CD8-positive, alpha-beta T cell (primary cell): ENCODE measurements at regions of chr6 and their contacts with region 1.

Region 1: GRCh38 chr6:43723737-43724295 is 36.2 kb upstream of the MRPS18A start:
- DNase-seq: peak; percentile 40 to 83 (median 69)
- ATAC-seq: peak; percentile 65
- H3K4me3 ChIP-seq: no peak overlapping the region
- H3K4me3 Mint-ChIP-seq: no peak overlapping the region
- H3K27ac ChIP-seq: no peak overlapping the region
- H3K27ac Mint-ChIP-seq: no peak overlapping the region
- H3K4me1 ChIP-seq: peaks cover 25% of the 10 kb centered on the region
- H3K4me1 Mint-ChIP-seq: peaks cover 35% of the 10 kb centered on the region
- H3K27me3 ChIP-seq: no peaks in the 10 kb centered on the region
- H3K27me3 Mint-ChIP-seq: no peaks in the 10 kb centered on the region
- CTCF ChIP-seq: peak; percentile 70

Region 2: GRCh38 chr6:41735427-41736356 is 1988.1 kb before region 1 on chr6 and contains the start of gene TFEB:
- CTCF ChIA-PET with region 1: no interaction called
- POLR2A ChIA-PET with region 1: no interaction called
- intact Hi-C with region 1: no loop called
- DNase-seq: peak; percentile 87 to 96 (median 94)
- ATAC-seq: peak; percentile 68
- H3K4me3 ChIP-seq: peak within 1 kb of the TSS; percentile 73 to 75
- H3K4me3 Mint-ChIP-seq: peak within 1 kb of the TSS; percentile 88
- H3K27ac ChIP-seq: peak within 1 kb of the TSS; percentile 48 to 83
- H3K27ac Mint-ChIP-seq: peak within 1 kb of the TSS; percentile 76
- H3K4me1 ChIP-seq: peaks cover 39% of the 10 kb centered on the region
- H3K4me1 Mint-ChIP-seq: peaks cover 33% of the 10 kb centered on the region
- H3K27me3 ChIP-seq: no peaks in the 10 kb centered on the region
- H3K27me3 Mint-ChIP-seq: no peaks in the 10 kb centered on the region
- CTCF ChIP-seq: peak; percentile 67
- total RNA-seq, gene TFEB: 10.2 to 12.7 TPM

Region 3: GRCh38 chr6:43644931-43645612 is 78.7 kb before region 1 on chr6 and contains the start of gene RSPH9:
- CTCF ChIA-PET with region 1: no interaction called
- POLR2A ChIA-PET with region 1: no interaction called
- intact Hi-C with region 1: loop called in 1 of 2 experiments (anchors 1 kb)
- DNase-seq: peak in 8 of 9 experiments; percentile 33 to 70 (median 64)
- ATAC-seq: peak; percentile 85
- H3K4me3 ChIP-seq: peak within 1 kb of the TSS; percentile 37 to 38
- H3K4me3 Mint-ChIP-seq: peak within 1 kb of the TSS; percentile 75
- H3K27ac ChIP-seq: no peak within 1 kb of the TSS
- H3K27ac Mint-ChIP-seq: peak within 1 kb of the TSS; percentile 11
- H3K4me1 ChIP-seq: peaks cover 4% of the 10 kb centered on the region
- H3K4me1 Mint-ChIP-seq: peaks cover 36% of the 10 kb centered on the region
- H3K27me3 ChIP-seq: no peaks in the 10 kb centered on the region
- H3K27me3 Mint-ChIP-seq: no peaks in the 10 kb centered on the region
- CTCF ChIP-seq: no peak
- total RNA-seq, gene RSPH9: not detected

Region 4: GRCh38 chr6:43687437-43688347 is 36.1 kb before region 1 on chr6 and contains the start of gene MRPS18A:
- CTCF ChIA-PET with region 1: no interaction called
- POLR2A ChIA-PET with region 1: interaction called, 3 read pairs
- intact Hi-C with region 1: loop called in 1 of 2 experiments (anchors 1 kb)
- DNase-seq: peak; percentile 47 to 86 (median 77)
- ATAC-seq: peak; percentile 94
- H3K4me3 ChIP-seq: peak within 1 kb of the TSS; percentile 94 to 97
- H3K4me3 Mint-ChIP-seq: peak within 1 kb of the TSS; percentile 95
- H3K27ac ChIP-seq: peak within 1 kb of the TSS; percentile 68 to 72
- H3K27ac Mint-ChIP-seq: peak within 1 kb of the TSS; percentile 88
- H3K4me1 ChIP-seq: peaks cover 25% of the 10 kb centered on the region
- H3K4me1 Mint-ChIP-seq: peaks cover 49% of the 10 kb centered on the region
- H3K27me3 ChIP-seq: no peaks in the 10 kb centered on the region
- H3K27me3 Mint-ChIP-seq: no peaks in the 10 kb centered on the region
- CTCF ChIP-seq: no peak
- total RNA-seq, gene MRPS18A: 43.9 to 44.6 TPM

Region 5: DNA sequence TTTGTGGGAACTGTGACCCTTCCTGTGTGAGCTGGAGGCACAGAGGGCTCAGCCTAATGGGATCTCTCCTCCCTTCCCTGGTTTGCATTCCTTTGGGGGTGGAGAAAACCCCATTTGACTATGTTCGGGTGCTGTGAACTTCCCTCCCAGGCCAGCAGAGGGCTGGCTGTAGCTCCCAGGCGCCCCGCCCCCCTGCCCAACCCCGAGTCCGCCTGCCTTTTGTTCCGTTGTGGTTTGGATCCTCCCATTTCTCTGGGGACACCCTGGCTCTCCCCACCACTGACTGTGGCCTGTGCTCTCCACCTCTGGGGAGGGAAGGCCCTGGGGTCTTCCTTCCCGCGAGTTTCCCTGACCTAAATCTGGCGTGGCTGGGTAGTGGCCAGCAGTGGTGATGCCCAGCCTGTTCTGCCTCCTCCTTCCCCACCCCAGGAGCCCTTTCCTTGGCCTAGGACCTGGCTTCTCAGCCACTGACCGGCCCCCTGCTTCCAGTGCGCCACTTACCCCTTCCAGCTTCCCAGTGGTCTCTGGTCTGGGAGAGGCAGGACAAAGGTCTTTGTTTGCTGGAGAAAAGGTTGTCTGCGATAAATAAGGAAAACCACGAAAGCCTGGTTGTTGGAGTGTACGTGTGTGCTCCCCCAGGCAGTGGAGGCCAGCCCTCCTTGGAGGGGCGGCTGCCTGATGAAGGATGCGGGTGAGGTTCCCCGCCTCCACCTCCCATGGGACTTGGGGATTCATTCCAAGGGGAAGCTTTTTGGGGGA is 51.1 kb after region 1 on chr6:
- CTCF ChIA-PET with region 1: interaction called, 15 read pairs
- POLR2A ChIA-PET with region 1: no interaction called
- intact Hi-C with region 1: loop called in 1 of 2 experiments (anchors 1 kb)
- DNase-seq: peak in 8 of 9 experiments; percentile 27 to 76 (median 56)
- ATAC-seq: peak; percentile 24
- H3K4me3 ChIP-seq: no peak overlapping the region
- H3K4me3 Mint-ChIP-seq: no peak overlapping the region
- H3K27ac ChIP-seq: no peak overlapping the region
- H3K27ac Mint-ChIP-seq: no peak overlapping the region
- H3K4me1 ChIP-seq: peaks cover 9% of the 10 kb centered on the region
- H3K4me1 Mint-ChIP-seq: peaks cover 12% of the 10 kb centered on the region
- H3K27me3 ChIP-seq: peaks cover 0 to 20% of the 10 kb centered on the region in 2 experiments
- H3K27me3 Mint-ChIP-seq: peaks cover 25% of the 10 kb centered on the region
- CTCF ChIP-seq: peak; percentile 70